Endothelial cell of umbilical vein (primary cell): ENCODE measurements at regions of chr2 and their contacts with region 1.

Region 1: DNA sequence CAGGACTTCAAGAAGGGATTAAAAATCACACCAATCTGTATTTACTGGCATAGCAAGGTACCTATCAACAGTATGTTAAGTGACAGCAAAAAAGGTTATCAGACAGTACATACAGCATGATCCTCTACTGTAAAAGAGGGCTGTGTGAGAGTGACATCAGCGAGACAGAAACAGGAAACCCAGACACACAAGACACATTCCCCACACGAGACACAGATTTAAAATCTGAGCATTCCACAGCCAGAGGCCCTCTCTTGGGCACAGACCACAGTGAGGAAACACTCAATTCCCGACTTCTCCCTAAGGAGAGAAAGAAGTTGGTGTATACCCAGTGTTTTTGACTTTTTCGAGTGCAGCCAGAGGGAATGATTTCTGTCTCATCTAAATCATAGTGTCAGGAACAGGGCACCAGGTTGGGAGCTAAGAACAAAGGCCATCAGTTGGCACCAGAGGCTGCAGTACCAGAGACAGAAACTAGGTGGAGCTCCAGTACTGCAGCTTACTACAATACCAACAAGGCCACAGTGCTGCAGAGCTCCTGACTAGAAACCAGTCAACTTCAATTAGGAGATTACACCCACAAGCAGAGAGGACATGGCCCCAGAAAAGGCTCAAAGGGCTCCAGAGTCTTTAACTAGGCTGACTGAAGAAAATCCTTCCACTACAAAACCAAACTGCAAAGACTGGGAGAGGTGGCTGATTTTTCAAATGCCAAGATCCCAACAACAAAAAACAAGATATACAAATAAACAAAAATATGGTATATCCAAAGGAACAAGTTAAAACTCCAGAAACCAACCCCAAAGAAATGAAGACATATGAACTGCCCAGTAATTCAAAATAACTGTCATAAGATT is 41.0 kb downstream of the UNC50 start:
- DNase-seq: peak; percentile 87
- H3K4me3 ChIP-seq: no peak overlapping the region
- H3K27ac ChIP-seq: peak overlapping the region; percentile 54
- H3K4me1 ChIP-seq: peaks cover 4% of the 10 kb centered on the region
- H3K27me3 ChIP-seq: no peaks in the 10 kb centered on the region
- CTCF ChIP-seq: peak; percentile 97
- POLR2A ChIP-seq: no peak

Region 2: DNA sequence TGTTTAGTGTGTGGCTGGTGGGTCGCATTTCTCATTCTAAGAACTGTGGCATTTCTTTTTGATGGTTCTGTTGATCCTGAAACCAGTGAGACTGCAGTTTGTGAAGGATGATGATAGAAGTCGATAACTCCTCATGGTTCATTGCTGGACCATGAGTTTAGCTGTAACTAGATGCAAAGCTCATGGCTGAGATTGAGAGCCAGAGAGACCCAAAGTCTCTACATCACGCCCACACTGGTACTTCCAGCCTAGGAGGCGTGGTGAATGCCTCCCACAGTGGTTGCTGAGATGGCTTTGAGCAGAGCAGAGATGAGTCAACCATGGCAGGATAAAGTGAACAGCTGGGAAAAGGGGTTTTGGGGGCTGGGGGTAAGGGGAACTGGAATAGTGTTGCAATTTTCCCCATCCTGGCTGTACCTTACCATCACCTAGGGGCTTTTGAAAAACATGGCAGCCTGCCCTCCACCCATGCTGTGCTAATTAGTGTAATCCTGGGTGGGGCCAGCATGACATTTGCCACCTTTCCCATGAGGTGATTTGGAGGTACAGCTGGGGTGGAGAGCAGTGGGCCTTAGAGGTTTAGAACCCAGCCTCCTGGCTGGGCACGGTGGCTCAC is 180.6 kb before region 1 on chr2:
- CTCF ChIA-PET with region 1: no interaction called
- POLR2A ChIA-PET with region 1: no interaction called
- dilution Hi-C with region 1: no loop called
- intact Hi-C with region 1: no loop called
- DNase-seq: no peak
- H3K4me3 ChIP-seq: no peak overlapping the region
- H3K27ac ChIP-seq: no peak overlapping the region
- H3K4me1 ChIP-seq: peaks cover 20% of the 10 kb centered on the region
- H3K27me3 ChIP-seq: no peaks in the 10 kb centered on the region
- CTCF ChIP-seq: no peak
- POLR2A ChIP-seq: no peak

Region 3: DNA sequence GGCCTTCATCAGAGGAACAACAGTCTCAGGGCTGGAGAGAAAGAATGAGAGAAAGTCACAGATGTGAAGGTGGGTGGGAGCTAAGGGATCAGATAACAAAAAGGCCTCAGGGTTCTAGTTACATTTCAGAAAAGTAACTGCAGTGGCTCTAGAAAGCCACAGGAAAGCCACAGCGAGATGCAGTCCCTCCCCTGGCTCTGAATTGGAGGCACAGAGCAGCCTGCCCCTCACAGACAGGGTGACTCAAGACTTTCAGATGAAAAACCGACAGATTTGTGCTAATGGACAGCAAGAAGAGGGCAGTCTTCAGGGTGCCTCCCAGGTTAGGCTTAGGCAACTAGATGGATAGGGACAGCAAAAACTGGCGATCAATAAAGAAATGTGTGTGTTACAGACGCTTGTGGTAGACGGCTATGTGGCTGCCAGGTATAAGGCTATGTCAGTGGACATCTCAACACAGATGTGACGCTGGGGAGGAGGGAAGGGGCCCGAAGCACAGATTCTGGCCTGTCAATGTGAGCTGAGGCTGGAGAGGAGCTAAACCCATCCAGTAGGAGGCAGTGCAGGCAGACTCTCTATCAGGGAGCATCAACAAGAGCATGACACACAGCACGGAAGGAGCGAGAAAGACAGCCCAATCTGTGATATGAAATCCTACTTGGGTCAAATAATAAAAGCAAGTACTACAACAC is 14.8 kb before region 1 on chr2:
- CTCF ChIA-PET with region 1: interaction called, 13 read pairs
- POLR2A ChIA-PET with region 1: no interaction called
- dilution Hi-C with region 1: no loop called
- intact Hi-C with region 1: no loop called
- DNase-seq: peak; percentile 17
- H3K4me3 ChIP-seq: no peak overlapping the region
- H3K27ac ChIP-seq: no peak overlapping the region
- H3K4me1 ChIP-seq: no peaks in the 10 kb centered on the region
- H3K27me3 ChIP-seq: no peaks in the 10 kb centered on the region
- CTCF ChIP-seq: peak; percentile 36 to 43
- POLR2A ChIP-seq: no peak

Region 4: GRCh38 chr2:98709535-98709934 is 60.2 kb after region 1 on chr2:
- CTCF ChIA-PET with region 1: interaction called, 16 read pairs
- POLR2A ChIA-PET with region 1: interaction called, 3 read pairs
- dilution Hi-C with region 1: no loop called
- intact Hi-C with region 1: loop called (anchors 5 kb)
- DNase-seq: peak; percentile 82
- H3K4me3 ChIP-seq: no peak overlapping the region
- H3K27ac ChIP-seq: no peak overlapping the region
- H3K4me1 ChIP-seq: peaks cover 42% of the 10 kb centered on the region
- H3K27me3 ChIP-seq: no peaks in the 10 kb centered on the region
- CTCF ChIP-seq: no peak
- POLR2A ChIP-seq: no peak

Region 5: DNA sequence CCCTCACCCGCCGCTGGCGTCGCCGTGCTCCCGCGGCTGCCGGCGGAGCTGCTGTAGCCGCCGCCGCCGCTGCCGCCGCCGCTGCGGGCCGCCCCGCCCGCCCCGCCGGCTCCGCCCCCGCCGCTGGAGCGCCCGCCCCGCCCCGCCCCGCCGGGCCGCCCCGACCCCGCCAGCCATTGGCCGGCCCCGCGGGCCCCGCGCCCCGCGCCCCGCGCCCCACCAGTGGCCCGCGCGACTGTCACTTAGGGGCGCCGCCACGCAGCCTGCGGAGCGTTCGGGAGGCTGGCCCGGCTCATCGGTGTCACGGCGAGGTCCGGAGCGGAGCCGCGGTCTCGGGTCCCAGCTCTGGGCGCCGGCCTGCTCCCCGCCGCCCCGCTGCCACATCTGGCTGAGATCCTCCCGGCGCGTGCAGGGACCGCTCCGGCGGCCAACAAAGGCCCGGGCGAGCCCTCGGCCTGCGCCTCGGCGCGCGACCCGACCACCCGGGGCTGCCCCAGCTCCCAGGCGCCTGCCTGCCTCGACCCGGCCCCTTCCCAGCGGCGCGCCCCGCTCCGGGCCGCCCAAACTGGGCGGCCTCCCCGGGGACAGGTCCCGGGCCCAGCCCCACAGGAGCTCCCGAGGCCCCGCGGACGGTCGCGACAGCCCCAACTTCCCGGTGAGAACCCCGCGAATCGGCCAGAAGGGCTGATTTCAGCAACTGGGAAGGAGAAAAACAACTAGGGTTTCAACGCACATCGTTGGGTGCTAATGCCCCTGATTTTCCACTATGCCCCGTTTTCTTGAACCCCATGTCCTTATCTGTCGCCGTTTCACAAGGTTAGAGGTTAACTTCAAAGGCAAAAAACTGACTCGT is 81.9 kb after region 1 on chr2 and contains the start of gene MGAT4A:
- CTCF ChIA-PET with region 1: interaction called, 37 read pairs
- POLR2A ChIA-PET with region 1: interaction called, 5 read pairs
- dilution Hi-C with region 1: no loop called
- intact Hi-C with region 1: loop called (anchors 1 kb)
- DNase-seq: peak; percentile 52
- H3K4me3 ChIP-seq: peak within 1 kb of the TSS; percentile 64 to 97 (median 77)
- H3K27ac ChIP-seq: peak within 1 kb of the TSS; percentile 60
- H3K4me1 ChIP-seq: peaks cover 48% of the 10 kb centered on the region
- H3K27me3 ChIP-seq: no peaks in the 10 kb centered on the region
- CTCF ChIP-seq: no peak
- POLR2A ChIP-seq: peak; percentile 68
- total RNA-seq, gene MGAT4A: 42.2 and 47.6 TPM in 2 replicates

Region 6: GRCh38 chr2:98822301-98823164 is 173.2 kb after region 1 on chr2:
- CTCF ChIA-PET with region 1: interaction called, 31 read pairs
- POLR2A ChIA-PET with region 1: no interaction called
- dilution Hi-C with region 1: no loop called
- intact Hi-C with region 1: no loop called
- DNase-seq: peak; percentile 38
- H3K4me3 ChIP-seq: peak overlapping the region in 2 of 3 experiments; percentile 44
- H3K27ac ChIP-seq: peak overlapping the region; percentile 53
- H3K4me1 ChIP-seq: peaks cover 11% of the 10 kb centered on the region
- H3K27me3 ChIP-seq: no peaks in the 10 kb centered on the region
- CTCF ChIP-seq: peak; percentile 33 to 64
- POLR2A ChIP-seq: no peak

Region 7: DNA sequence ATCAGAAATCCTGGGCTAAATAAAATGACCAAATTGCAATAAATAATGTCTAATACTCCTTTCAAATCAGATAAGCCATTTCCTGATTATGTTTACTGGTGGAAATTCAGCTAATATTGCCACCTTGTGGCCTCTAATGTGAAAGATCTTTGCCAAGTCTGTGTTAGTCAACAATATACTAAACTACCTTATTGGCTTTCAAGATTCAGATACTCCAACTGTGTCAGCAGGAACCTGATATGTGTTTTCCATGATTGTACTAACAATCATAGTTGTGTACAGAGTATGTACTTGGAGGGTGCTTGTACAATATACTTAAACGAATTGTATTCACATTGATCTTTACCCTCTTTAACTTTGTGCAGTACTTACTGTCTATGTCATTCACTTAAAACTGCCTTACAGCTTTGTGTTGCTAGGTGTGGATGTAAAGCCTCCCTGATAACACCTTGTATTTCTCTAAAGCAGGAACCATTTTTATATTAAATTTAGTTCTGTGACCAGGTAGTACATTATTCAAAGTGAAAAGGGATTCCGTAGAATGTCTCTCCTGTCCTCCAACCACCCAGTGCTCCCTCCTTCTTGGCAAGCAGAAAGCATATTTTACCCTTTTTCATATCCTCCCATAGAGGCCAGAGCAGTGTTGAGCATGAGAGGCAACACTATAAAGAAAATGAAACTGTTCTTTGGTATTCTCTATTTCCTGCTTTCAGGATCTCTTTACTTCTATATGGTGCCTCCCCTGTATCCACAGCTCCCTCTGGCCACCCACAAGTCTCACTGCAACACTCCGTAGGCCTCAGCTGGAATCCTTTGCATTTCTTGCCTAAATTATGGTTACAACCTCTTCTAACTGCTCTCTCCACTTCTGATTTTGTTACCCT is 417.0 kb after region 1 on chr2:
- CTCF ChIA-PET with region 1: interaction called, 61 read pairs
- POLR2A ChIA-PET with region 1: no interaction called
- dilution Hi-C with region 1: no loop called
- intact Hi-C with region 1: loop called (anchors 1 kb)
- DNase-seq: peak; percentile 68
- H3K4me3 ChIP-seq: peak overlapping the region in 1 of 3 experiments; percentile 26
- H3K27ac ChIP-seq: no peak overlapping the region
- H3K4me1 ChIP-seq: peaks cover 20% of the 10 kb centered on the region
- H3K27me3 ChIP-seq: no peaks in the 10 kb centered on the region
- CTCF ChIP-seq: peak; percentile 39 to 61
- POLR2A ChIP-seq: no peak